CD14-positive monocyte (primary cell): ENCODE measurements at regions of chr9 and their contacts with region 1.

Region 1: DNA sequence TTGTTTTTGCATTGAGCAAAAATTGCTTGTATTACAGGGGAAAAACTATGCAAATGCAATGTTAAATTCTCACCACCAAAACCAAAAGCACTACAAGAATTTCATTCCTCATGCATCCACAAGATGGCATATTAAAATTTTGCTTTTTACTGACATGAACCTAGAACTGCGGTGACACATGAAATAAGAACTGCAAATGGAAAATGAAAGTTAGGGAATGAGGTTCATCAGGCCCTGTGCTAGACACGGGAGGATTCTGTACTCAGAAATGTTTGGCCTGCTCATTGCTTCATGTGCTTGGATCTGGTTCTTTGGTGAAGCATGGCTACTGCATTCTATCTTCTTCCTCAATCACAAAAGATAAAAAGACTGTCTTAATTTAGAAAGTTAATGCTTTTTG is 9.1 kb upstream of the RFK start:
- DNase-seq: peak; percentile 53 to 64 (median 60)
- H3K4me3 ChIP-seq: peak overlapping the region in 1 of 3 experiments; percentile 45
- H3K4me3 Mint-ChIP-seq: peak overlapping the region; percentile 24 to 60
- H3K27ac ChIP-seq: peak overlapping the region in 1 of 2 donors; percentile 63
- H3K27ac Mint-ChIP-seq: peak overlapping the region; percentile 11 to 81 (median 66)
- H3K4me1 ChIP-seq: peaks cover 3 to 8% of the 10 kb centered on the region in 2 donors
- H3K4me1 Mint-ChIP-seq: peaks cover 20% of the 10 kb centered on the region
- H3K27me3 ChIP-seq: no peaks in the 10 kb centered on the region
- H3K27me3 Mint-ChIP-seq: peaks cover 0 to 6% (median 0%) of the 10 kb centered on the region in 3 donors
- CTCF ChIP-seq: peak; percentile 56

Region 2: DNA sequence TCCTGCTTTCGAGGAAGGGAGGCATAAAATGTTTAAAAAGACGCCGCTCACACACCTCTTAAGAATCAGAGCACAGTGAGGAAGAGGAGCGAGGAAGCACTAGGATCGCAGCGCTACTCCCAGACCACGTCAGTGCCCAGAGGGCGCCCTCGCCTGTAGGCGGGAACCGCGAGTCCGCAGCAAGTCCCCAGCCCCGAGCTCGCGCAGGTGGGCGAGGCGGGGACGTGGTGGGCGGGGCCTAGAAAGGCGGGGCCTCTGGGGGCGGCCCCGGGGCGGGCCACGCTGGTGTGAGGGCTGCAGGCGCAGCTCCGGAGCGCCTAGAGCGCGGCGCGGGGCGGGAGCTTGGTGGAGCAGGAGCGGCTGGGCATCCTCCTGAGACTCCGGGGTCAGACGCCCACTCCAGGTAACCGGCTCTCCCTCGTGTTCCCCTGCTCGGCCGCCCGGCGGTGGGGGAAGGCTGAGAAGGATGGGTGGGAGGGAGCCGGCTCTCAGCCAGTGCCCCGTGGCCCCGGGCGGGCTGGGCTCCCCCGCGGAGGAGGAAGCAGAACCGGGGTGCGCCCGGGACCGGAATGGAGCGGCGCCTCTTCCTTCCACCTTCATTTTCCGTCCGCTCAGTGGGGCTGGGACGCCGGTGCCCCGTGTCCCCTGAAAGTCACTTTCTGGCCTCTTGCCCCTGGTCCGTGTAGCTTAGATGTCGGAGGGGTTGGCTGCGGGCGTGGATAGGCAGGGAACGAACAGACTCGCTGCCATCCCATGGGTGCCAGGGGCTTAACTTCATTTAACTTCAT is 55.7 kb after region 1 on chr9 and contains the start of gene GCNT1:
- intact Hi-C with region 1: loop called in 1 of 2 experiments (anchors 10 kb)
- DNase-seq: peak; percentile 62 to 75 (median 69)
- H3K4me3 ChIP-seq: peak within 1 kb of the TSS; percentile 93 to 97 (median 96)
- H3K4me3 Mint-ChIP-seq: peak within 1 kb of the TSS; percentile 99 to 100
- H3K27ac ChIP-seq: peak within 1 kb of the TSS; percentile 78 to 85
- H3K27ac Mint-ChIP-seq: peak within 1 kb of the TSS; percentile 82 to 96 (median 94)
- H3K4me1 ChIP-seq: peaks cover 26 to 44% of the 10 kb centered on the region in 2 donors
- H3K4me1 Mint-ChIP-seq: peaks cover 56% of the 10 kb centered on the region
- H3K27me3 ChIP-seq: no peaks in the 10 kb centered on the region
- H3K27me3 Mint-ChIP-seq: peaks cover 0 to 1% (median 0%) of the 10 kb centered on the region in 3 donors
- CTCF ChIP-seq: no peak
- polyA plus RNA-seq, gene GCNT1: 8.4 to 15.4 (median 9.3) TPM

Region 3: GRCh38 chr9:76592091-76593010 is 189.0 kb after region 1 on chr9:
- intact Hi-C with region 1: no loop called
- DNase-seq: no peak
- H3K4me3 ChIP-seq: no peak overlapping the region
- H3K4me3 Mint-ChIP-seq: no peak overlapping the region
- H3K27ac ChIP-seq: peak overlapping the region in 1 of 2 donors; percentile 21
- H3K27ac Mint-ChIP-seq: peak overlapping the region in 6 of 7 donors; percentile 51 to 87 (median 72)
- H3K4me1 ChIP-seq: peaks cover 77 to 85% of the 10 kb centered on the region in 2 donors
- H3K4me1 Mint-ChIP-seq: peaks cover 68% of the 10 kb centered on the region
- H3K27me3 ChIP-seq: no peaks in the 10 kb centered on the region
- H3K27me3 Mint-ChIP-seq: peaks cover 0 to 3% (median 2%) of the 10 kb centered on the region in 3 donors
- CTCF ChIP-seq: no peak